Activated T-helper 1 cell treated with anti-CD3 and anti-CD28 coated beads, Interleukin-12 subunit alpha, Interleukin-12 subunit beta, Interleukin-2, Interleukin-4 antibody, amounts not matched to agents 30 ng/mL and 10 ng/mL and 1 ng/mL, durations not matched to agents 14 hours and 24 hours and 36 hours (primary cell): ENCODE measurements at regions of chr2 and their contacts with region 1.

Region 1: GRCh38 chr2:224927646-224928173 is 114.6 kb downstream of the DOCK10 start:
- DNase-seq: peak; percentile 64
- H3K4me3 Mint-ChIP-seq: peak overlapping the region; percentile 56
- H3K27ac Mint-ChIP-seq: peak overlapping the region; percentile 99
- H3K4me1 Mint-ChIP-seq: peaks cover 99% of the 10 kb centered on the region
- H3K27me3 Mint-ChIP-seq: no peaks in the 10 kb centered on the region

Region 2: GRCh38 chr2:224520064-224520463 is 407.6 kb before region 1 on chr2:
- intact Hi-C with region 1: loop called (anchors 1 kb)
- DNase-seq: peak; percentile 16
- H3K4me3 Mint-ChIP-seq: no peak overlapping the region
- H3K27ac Mint-ChIP-seq: peak overlapping the region; percentile 68
- H3K4me1 Mint-ChIP-seq: peaks cover 48% of the 10 kb centered on the region
- H3K27me3 Mint-ChIP-seq: no peaks in the 10 kb centered on the region

Region 3: GRCh38 chr2:224875841-224876240 is 51.9 kb before region 1 on chr2:
- intact Hi-C with region 1: no loop called
- DNase-seq: no peak
- H3K4me3 Mint-ChIP-seq: no peak overlapping the region
- H3K27ac Mint-ChIP-seq: no peak overlapping the region
- H3K4me1 Mint-ChIP-seq: peaks cover 25% of the 10 kb centered on the region
- H3K27me3 Mint-ChIP-seq: no peaks in the 10 kb centered on the region

Region 4: DNA sequence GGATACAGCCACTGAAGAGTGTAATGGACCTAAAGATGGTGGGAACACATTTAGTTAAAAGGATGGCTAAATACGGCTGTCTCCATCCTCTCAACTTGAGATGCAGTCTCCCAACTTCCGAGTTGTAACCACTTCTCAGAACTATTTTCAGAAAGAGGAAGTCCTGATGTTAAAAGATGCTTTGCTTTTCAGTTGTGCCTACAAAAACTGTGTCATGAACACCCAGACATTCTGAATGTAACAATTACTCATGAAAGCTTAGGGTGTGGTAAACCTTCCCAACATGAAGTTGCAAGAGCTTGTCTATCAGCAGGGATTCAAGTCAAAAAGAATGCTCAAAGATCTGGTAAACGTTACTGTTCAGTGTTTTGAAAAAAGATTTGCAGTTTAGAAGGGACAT is 33.4 kb before region 1 on chr2:
- intact Hi-C with region 1: loop called (anchors 2 kb)
- DNase-seq: no peak
- H3K4me3 Mint-ChIP-seq: peak overlapping the region; percentile 73
- H3K27ac Mint-ChIP-seq: peak overlapping the region; percentile 85
- H3K4me1 Mint-ChIP-seq: peaks cover 79% of the 10 kb centered on the region
- H3K27me3 Mint-ChIP-seq: no peaks in the 10 kb centered on the region

Region 5: DNA sequence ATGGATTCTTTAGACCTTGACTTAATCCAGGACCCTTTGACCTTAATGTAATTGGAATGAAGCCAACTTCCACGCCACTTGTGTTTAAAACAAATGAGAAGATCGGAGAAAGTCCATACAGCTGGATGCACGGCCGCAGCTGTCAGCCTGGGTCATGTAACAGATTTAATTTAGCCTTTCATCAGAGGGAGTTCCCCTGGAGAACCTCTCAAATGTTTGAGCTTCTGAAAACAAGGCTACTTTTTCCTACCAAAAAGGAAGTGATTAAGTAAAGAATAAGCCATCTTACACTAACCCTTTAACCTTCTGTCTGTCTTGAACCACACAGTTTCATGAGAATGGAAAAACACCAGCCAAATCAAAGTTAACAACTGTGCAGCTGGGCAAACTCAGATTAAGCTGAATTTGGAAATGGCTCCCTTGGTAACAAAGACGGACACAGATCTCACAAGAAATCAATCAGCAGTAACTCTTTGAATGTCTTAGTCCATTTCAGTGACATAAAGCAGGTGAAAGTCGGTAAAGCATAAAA is 11.0 kb after region 1 on chr2:
- intact Hi-C with region 1: loop called (anchors 1 kb)
- DNase-seq: no peak
- H3K4me3 Mint-ChIP-seq: peak overlapping the region; percentile 81
- H3K27ac Mint-ChIP-seq: peak overlapping the region; percentile 91
- H3K4me1 Mint-ChIP-seq: peaks cover 81% of the 10 kb centered on the region
- H3K27me3 Mint-ChIP-seq: no peaks in the 10 kb centered on the region

Region 6: GRCh38 chr2:224982910-224983711 is 55.4 kb after region 1 on chr2:
- intact Hi-C with region 1: loop called (anchors 2 kb)
- DNase-seq: peak; percentile 45
- H3K4me3 Mint-ChIP-seq: peak overlapping the region; percentile 80
- H3K27ac Mint-ChIP-seq: peak overlapping the region; percentile 96
- H3K4me1 Mint-ChIP-seq: peaks cover 86% of the 10 kb centered on the region
- H3K27me3 Mint-ChIP-seq: no peaks in the 10 kb centered on the region

Region 7: DNA sequence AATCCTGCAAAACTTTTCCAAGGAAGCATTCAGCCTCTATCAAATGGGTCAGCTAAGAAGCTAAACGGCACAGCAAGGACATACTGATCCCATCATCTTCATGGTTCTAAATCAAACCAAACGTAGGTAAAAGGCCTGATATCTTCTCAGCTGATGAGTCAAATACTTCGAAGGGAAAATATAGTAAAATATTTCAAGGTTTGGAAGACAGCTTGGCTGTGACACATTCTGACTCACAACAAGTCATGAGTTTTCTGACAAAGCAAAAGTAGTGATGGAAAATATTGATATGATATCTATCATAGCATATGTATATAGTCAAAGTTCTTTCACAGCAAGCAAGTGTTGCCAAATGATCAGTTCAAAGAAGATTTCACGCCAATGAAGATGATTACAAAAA is 83.1 kb after region 1 on chr2:
- intact Hi-C with region 1: loop called (anchors 1 kb)
- DNase-seq: no peak
- H3K4me3 Mint-ChIP-seq: peak overlapping the region; percentile 57
- H3K27ac Mint-ChIP-seq: peak overlapping the region; percentile 90
- H3K4me1 Mint-ChIP-seq: peaks cover 75% of the 10 kb centered on the region
- H3K27me3 Mint-ChIP-seq: no peaks in the 10 kb centered on the region